ENCODE measurements at regions of chr9 and their contacts with region 1.

Region 1: DNA sequence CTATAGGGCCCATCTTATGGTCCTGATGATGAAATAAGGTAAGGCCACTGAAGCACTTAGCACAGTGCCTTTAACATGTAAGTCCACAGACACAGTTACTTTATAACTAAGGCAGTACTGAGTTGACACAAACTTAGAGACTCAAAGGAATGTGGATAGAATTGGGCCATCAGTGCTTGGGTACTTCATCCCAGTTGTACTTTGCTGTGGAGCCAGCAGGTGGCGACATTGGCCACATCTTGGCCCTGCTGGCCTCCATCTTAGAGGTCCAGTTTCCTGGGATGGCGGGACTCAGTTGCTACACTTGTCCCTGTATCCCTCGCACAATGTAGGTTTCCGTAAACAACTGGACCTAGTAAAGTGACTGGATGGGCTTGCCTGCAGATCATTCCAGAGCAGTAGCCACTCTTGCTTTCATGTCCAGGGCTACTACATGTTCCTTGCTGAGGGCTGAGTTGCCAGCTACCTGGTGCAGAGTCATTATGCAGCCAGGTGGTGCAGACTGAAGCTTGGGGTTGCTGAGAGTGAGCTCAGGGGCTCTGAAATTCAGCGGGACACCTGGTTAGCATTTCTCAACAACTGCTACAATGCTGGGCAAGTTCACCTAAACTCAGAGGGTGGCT is 10.6 kb downstream of the MTAP start:
- DNase-seq: peak; percentile 59 to 71 (median 64)
- H3K4me3 ChIP-seq: no peak overlapping the region
- H3K4me3 Mint-ChIP-seq: peak overlapping the region in 2 of 8 donors; percentile 41 to 49
- H3K27ac ChIP-seq: no peak overlapping the region
- H3K27ac Mint-ChIP-seq: peak overlapping the region in 6 of 7 donors; percentile 58 to 85 (median 74)
- H3K4me1 ChIP-seq: peaks cover 14% of the 10 kb centered on the region
- H3K4me1 Mint-ChIP-seq: peaks cover 9 to 21% (median 16%) of the 10 kb centered on the region in 4 donors
- H3K27me3 ChIP-seq: no peaks in the 10 kb centered on the region
- H3K27me3 Mint-ChIP-seq: no peaks in the 10 kb centered on the region

Region 2: GRCh38 chr9:21031091-21031807 is 781.8 kb before region 1 on chr9 and contains the start of gene HACD4:
- CTCF ChIA-PET with region 1: no interaction called
- POLR2A ChIA-PET with region 1: no interaction called
- intact Hi-C with region 1: no loop called
- DNase-seq: peak; percentile 69 to 77 (median 74)
- H3K4me3 ChIP-seq: peak within 1 kb of the TSS; percentile 74 to 85
- H3K4me3 Mint-ChIP-seq: peak within 1 kb of the TSS in 6 of 8 donors; percentile 79 to 85 (median 81)
- H3K27ac ChIP-seq: peak within 1 kb of the TSS; percentile 64
- H3K27ac Mint-ChIP-seq: peak within 1 kb of the TSS in 6 of 7 donors; percentile 76 to 93 (median 86)
- H3K4me1 ChIP-seq: peaks cover 44% of the 10 kb centered on the region
- H3K4me1 Mint-ChIP-seq: peaks cover 21 to 33% (median 27%) of the 10 kb centered on the region in 4 donors
- H3K27me3 ChIP-seq: no peaks in the 10 kb centered on the region
- H3K27me3 Mint-ChIP-seq: no peaks in the 10 kb centered on the region
- total RNA-seq, gene HACD4: 16.0 to 18.3 TPM

Region 3: GRCh38 chr9:21802195-21803000 is 10.7 kb before region 1 on chr9 and contains the start of gene MTAP:
- CTCF ChIA-PET with region 1: interaction called, 35 read pairs
- POLR2A ChIA-PET with region 1: interaction called, 5 read pairs
- intact Hi-C with region 1: no loop called
- DNase-seq: peak in 4 of 5 donors; percentile 66 to 79 (median 76)
- H3K4me3 ChIP-seq: peak within 1 kb of the TSS; percentile 69 to 86
- H3K4me3 Mint-ChIP-seq: peak within 1 kb of the TSS; percentile 95 to 100 (median 99)
- H3K27ac ChIP-seq: peak within 1 kb of the TSS; percentile 50
- H3K27ac Mint-ChIP-seq: peak within 1 kb of the TSS; percentile 94 to 99 (median 98)
- H3K4me1 ChIP-seq: peaks cover 37% of the 10 kb centered on the region
- H3K4me1 Mint-ChIP-seq: peaks cover 28 to 52% (median 39%) of the 10 kb centered on the region in 4 donors
- H3K27me3 ChIP-seq: no peaks in the 10 kb centered on the region
- H3K27me3 Mint-ChIP-seq: peaks cover 4 to 5% of the 10 kb centered on the region in 2 donors
- total RNA-seq, gene MTAP: 45.5 to 47.9 TPM

Region 4: DNA sequence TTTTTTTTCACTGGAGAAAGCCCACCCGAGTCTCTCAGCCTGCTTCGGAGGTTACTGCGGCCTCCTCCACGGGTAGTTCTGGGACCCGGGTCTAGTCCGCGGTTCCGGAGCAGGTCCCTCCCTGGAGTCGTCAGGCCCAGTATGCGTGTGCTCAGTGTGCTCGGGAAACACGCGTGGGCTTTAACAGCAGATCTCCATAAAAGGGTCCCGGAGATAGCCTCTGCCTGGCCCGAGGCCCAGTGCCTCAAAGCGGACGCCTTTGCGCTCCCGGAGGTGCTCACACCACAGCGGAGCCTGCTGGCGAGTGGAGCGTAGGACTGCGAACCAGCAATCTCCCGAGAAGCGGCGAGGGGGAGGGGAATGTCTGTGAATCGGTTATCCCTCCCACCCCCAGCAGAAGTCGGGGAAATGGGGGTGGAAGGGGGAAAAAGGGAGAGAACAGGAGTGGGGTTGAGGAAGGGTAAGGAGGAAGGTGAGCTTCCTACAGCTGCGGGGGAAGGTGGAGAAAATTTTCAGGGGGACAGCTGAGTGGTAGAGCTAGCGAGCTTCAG is 152.4 kb after region 1 on chr9:
- CTCF ChIA-PET with region 1: interaction called, 9 read pairs
- POLR2A ChIA-PET with region 1: no interaction called
- intact Hi-C with region 1: loop called (anchors 1 kb)
- DNase-seq: peak; percentile 30 to 50 (median 34)
- H3K4me3 ChIP-seq: peak overlapping the region in 1 of 2 donors; percentile 44
- H3K4me3 Mint-ChIP-seq: peak overlapping the region; percentile 57 to 74 (median 64)
- H3K27ac ChIP-seq: no peak overlapping the region
- H3K27ac Mint-ChIP-seq: peak overlapping the region in 5 of 7 donors; percentile 57 to 81 (median 72)
- H3K4me1 ChIP-seq: peaks cover 22% of the 10 kb centered on the region
- H3K4me1 Mint-ChIP-seq: peaks cover 15 to 47% (median 27%) of the 10 kb centered on the region in 4 donors
- H3K27me3 ChIP-seq: peaks cover 69% of the 10 kb centered on the region
- H3K27me3 Mint-ChIP-seq: peaks cover 76 to 88% of the 10 kb centered on the region in 2 donors

Region 5: GRCh38 chr9:21995177-21996086 is 182.4 kb after region 1 on chr9:
- CTCF ChIA-PET with region 1: interaction called, 14 read pairs
- POLR2A ChIA-PET with region 1: interaction called, 3 read pairs
- intact Hi-C with region 1: loop called (anchors 1 kb)
- DNase-seq: peak; percentile 84 to 89 (median 85)
- H3K4me3 ChIP-seq: peak overlapping the region; percentile 92 to 94
- H3K4me3 Mint-ChIP-seq: peak overlapping the region; percentile 93 to 100 (median 98)
- H3K27ac ChIP-seq: peak overlapping the region; percentile 75
- H3K27ac Mint-ChIP-seq: peak overlapping the region; percentile 93 to 98 (median 94)
- H3K4me1 ChIP-seq: peaks cover 21% of the 10 kb centered on the region
- H3K4me1 Mint-ChIP-seq: peaks cover 6 to 33% (median 13%) of the 10 kb centered on the region in 4 donors
- H3K27me3 ChIP-seq: no peaks in the 10 kb centered on the region
- H3K27me3 Mint-ChIP-seq: peaks cover 1 to 3% of the 10 kb centered on the region in 2 donors

Region 6: GRCh38 chr9:22037954-22038690 is 225.1 kb after region 1 on chr9:
- CTCF ChIA-PET with region 1: interaction called, 349 read pairs
- POLR2A ChIA-PET with region 1: interaction called, 10 read pairs
- intact Hi-C with region 1: loop called (anchors 1 kb)
- DNase-seq: peak in 4 of 5 donors; percentile 22 to 39 (median 32)
- H3K4me3 ChIP-seq: no peak overlapping the region
- H3K4me3 Mint-ChIP-seq: no peak overlapping the region
- H3K27ac ChIP-seq: no peak overlapping the region
- H3K27ac Mint-ChIP-seq: no peak overlapping the region
- H3K4me1 ChIP-seq: peaks cover 11% of the 10 kb centered on the region
- H3K4me1 Mint-ChIP-seq: peaks cover 0 to 8% (median 4%) of the 10 kb centered on the region in 4 donors
- H3K27me3 ChIP-seq: no peaks in the 10 kb centered on the region
- H3K27me3 Mint-ChIP-seq: no peaks in the 10 kb centered on the region

Region 7: GRCh38 chr9:22238809-22239684 is 426.0 kb after region 1 on chr9:
- CTCF ChIA-PET with region 1: interaction called, 23 read pairs
- POLR2A ChIA-PET with region 1: no interaction called
- intact Hi-C with region 1: loop called (anchors 1 kb)
- DNase-seq: peak in 2 of 5 donors; percentile 4 to 12
- H3K4me3 ChIP-seq: no peak overlapping the region
- H3K4me3 Mint-ChIP-seq: peak overlapping the region in 1 of 8 donors; percentile 2
- H3K27ac ChIP-seq: no peak overlapping the region
- H3K27ac Mint-ChIP-seq: no peak overlapping the region
- H3K4me1 ChIP-seq: no peaks in the 10 kb centered on the region
- H3K4me1 Mint-ChIP-seq: peaks cover 3 to 24% (median 15%) of the 10 kb centered on the region in 4 donors
- H3K27me3 ChIP-seq: no peaks in the 10 kb centered on the region
- H3K27me3 Mint-ChIP-seq: no peaks in the 10 kb centered on the region

Region 8: GRCh38 chr9:22452415-22453010 is 639.5 kb after region 1 on chr9:
- CTCF ChIA-PET with region 1: interaction called, 37 read pairs
- POLR2A ChIA-PET with region 1: interaction called, 3 read pairs
- intact Hi-C with region 1: no loop called
- DNase-seq: peak; percentile 29 to 48 (median 35)
- H3K4me3 ChIP-seq: no peak overlapping the region
- H3K4me3 Mint-ChIP-seq: no peak overlapping the region
- H3K27ac ChIP-seq: no peak overlapping the region
- H3K27ac Mint-ChIP-seq: no peak overlapping the region
- H3K4me1 ChIP-seq: peaks cover 3% of the 10 kb centered on the region
- H3K4me1 Mint-ChIP-seq: peaks cover 0 to 7% (median 3%) of the 10 kb centered on the region in 4 donors
- H3K27me3 ChIP-seq: peaks cover 14% of the 10 kb centered on the region
- H3K27me3 Mint-ChIP-seq: peaks cover 23 to 31% of the 10 kb centered on the region in 2 donors

Measured in CD4-positive, alpha-beta memory T cell (primary cell).